ENCODE measurements at regions of chr2 and their contacts with region 1.

Region 1: GRCh38 chr2:75403991-75404428 is 156.7 kb downstream of the EVA1A start:
- DNase-seq: peak; percentile 54 to 75 (median 64)
- H3K4me3 ChIP-seq: no peak overlapping the region
- H3K27ac ChIP-seq: no peak overlapping the region
- H3K4me1 ChIP-seq: no peaks in the 10 kb centered on the region
- H3K27me3 ChIP-seq: peaks cover 0 to 4% (median 0%) of the 10 kb centered on the region in 5 experiments

Region 2: GRCh38 chr2:75199428-75200011 is 204.5 kb before region 1 on chr2 and contains the start of gene TACR1:
- CTCF ChIA-PET with region 1: interaction called, 17 read pairs
- POLR2A ChIA-PET with region 1: no interaction called
- DNase-seq: peak; percentile 73 to 87 (median 85)
- H3K4me3 ChIP-seq: peak within 1 kb of the TSS; percentile 0 to 73 (median 51)
- H3K27ac ChIP-seq: no peak within 1 kb of the TSS
- H3K4me1 ChIP-seq: peaks cover 0 to 25% (median 16%) of the 10 kb centered on the region in 4 experiments
- H3K27me3 ChIP-seq: peaks cover 0 to 57% (median 29%) of the 10 kb centered on the region in 5 experiments